Heart left ventricle (tissue), 16 donors: ENCODE measurements at regions of chr19 and their contacts with region 1.

Region 1: GRCh38 chr19:42268704-42269477 is at the start of gene CIC:
- DNase-seq: peak; percentile 100
- ATAC-seq: peak; percentile 88 to 94 (median 90)
- H3K4me3 ChIP-seq: peak within 1 kb of the TSS; percentile 40 to 81 (median 69)
- H3K27ac ChIP-seq: peak within 1 kb of the TSS; percentile 93 to 100 (median 97)
- H3K4me1 ChIP-seq: peaks cover 8 to 37% (median 29%) of the 10 kb centered on the region in 12 donors
- H3K27me3 ChIP-seq: no peaks in the 10 kb centered on the region
- CTCF ChIP-seq: no peak
- POLR2A ChIP-seq: no peak
- total RNA-seq, gene CIC: 25.5 to 54.8 (median 35.8) TPM

Region 2: GRCh38 chr19:42199440-42200115 is 69.3 kb before region 1 on chr19:
- intact Hi-C with region 1: no loop called
- DNase-seq: peak in 4 of 5 donors; percentile 46 to 79 (median 61)
- ATAC-seq: peak in 3 of 4 donors; percentile 49 to 73 (median 52)
- H3K4me3 ChIP-seq: peak overlapping the region in 2 of 12 donors; percentile 7 to 46
- H3K27ac ChIP-seq: peak overlapping the region in 4 of 12 donors; percentile 16 to 97 (median 32)
- H3K4me1 ChIP-seq: peaks cover 0 to 70% (median 12%) of the 10 kb centered on the region in 12 donors
- H3K27me3 ChIP-seq: no peaks in the 10 kb centered on the region
- CTCF ChIP-seq: peak in 1 of 12 donors; percentile 21
- POLR2A ChIP-seq: no peak

Region 3: DNA sequence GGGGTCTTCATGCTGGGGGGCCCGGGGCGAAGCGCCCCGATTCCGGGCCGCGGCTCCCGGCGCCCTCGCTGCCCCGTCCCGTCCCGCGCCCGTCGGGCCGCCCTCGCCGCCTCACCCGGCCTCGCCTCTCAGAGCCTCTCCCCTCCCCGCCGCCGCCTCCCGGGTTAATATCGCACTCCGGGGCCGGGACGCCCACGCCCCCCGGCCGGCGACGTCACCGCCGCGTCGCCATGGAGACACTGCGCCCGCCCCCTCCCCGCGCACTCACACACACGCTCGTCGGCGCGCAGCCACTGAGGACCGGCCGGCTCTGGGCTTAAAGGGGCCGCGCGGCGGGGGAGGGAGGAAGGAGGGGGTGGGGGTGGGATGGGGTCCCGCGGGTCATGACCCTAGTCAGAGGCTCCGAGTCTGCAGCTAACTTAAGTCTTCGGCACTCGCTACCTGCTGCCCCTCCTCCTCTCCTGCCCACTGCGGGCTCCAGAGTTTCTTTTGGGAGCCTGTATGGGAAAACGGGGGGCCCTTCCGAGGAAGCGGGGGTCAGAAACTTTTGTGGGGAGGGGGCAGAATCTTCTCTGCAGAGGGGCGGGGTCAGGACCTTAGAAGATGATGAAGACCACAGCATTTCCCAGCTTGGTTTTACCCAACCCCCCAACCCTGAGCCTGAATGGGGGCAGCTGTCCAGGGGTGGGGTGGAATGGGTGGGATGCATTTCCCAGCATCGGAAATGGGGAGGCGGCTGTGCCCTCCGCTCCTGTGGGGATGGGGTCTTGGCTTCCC is 13.7 kb before region 1 on chr19 and contains the start of gene ERF:
- intact Hi-C with region 1: loop called in 4 of 10 experiments (anchors 1 to 2 kb)
- DNase-seq: peak; percentile 94 to 98 (median 96)
- ATAC-seq: peak; percentile 64 to 84 (median 80)
- H3K4me3 ChIP-seq: peak within 1 kb of the TSS; percentile 74 to 100 (median 94)
- H3K27ac ChIP-seq: peak within 1 kb of the TSS; percentile 94 to 100 (median 99)
- H3K4me1 ChIP-seq: peaks cover 10 to 52% (median 38%) of the 10 kb centered on the region in 12 donors
- H3K27me3 ChIP-seq: no peaks in the 10 kb centered on the region
- CTCF ChIP-seq: no peak
- POLR2A ChIP-seq: peak; percentile 98 to 100
- total RNA-seq, gene ERF: 26.1 to 49.7 (median 35.5) TPM